ENCODE measurements at regions of chr7 and their contacts with region 1.

Region 1: DNA sequence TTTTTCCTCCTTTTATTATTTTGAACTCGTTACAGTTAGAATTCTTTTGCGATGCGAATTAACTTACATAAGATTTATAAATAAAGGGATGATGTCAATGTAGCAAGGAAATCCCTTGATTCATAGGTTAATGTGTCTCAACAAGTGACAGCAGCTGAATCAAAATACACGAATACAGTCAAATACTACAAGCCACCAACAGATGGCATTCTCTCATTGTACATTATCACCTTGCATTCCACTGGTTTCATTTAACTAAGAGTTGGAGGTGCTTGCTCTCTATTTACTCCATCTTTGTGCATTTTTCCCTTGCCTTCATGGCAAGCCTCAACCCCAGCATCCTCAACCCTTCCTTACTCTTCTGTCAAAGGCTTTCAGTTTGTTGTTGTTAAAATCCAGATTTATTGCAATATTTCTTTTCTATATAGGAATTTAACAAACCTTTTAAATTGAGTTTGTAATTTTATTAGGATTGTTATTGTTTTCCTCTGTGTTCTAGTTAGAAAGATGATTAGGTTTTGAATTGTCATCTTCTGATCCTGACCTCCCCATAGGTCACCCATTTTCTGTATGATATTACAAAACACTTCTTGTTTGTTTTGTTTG is 78.3 kb downstream of the SLC25A40 start:
- DNase-seq: peak; percentile 3
- H3K4me3 ChIP-seq: no peak overlapping the region
- CTCF ChIP-seq: peak; percentile 49

Region 2: DNA sequence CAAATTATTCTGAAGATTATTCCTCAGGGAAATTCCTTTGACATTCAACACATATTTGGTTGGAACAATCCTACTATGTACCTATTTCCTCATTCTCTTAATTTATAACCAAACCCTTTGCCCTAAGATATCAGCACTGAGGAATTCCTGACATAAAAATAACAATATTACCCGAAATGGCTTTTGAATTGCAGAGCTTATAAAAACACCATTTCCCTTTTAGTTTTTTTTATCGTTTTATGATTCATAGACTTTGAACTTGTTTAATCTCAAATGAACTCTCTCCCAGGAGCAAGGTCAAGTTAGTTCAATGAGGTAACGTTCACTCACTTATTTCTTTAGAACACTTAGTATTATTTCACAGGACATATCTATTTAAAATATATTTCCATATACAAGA is 189.5 kb before region 1 on chr7:
- CTCF ChIA-PET with region 1: no interaction called
- POLR2A ChIA-PET with region 1: no interaction called
- DNase-seq: no peak
- H3K4me3 ChIP-seq: no peak overlapping the region
- CTCF ChIP-seq: no peak

Region 3: GRCh38 chr7:87810130-87810529 is 12.2 kb after region 1 on chr7:
- CTCF ChIA-PET with region 1: interaction called, 15 read pairs
- POLR2A ChIA-PET with region 1: no interaction called
- DNase-seq: no peak
- H3K4me3 ChIP-seq: no peak overlapping the region
- CTCF ChIP-seq: no peak

Region 4: GRCh38 chr7:87933945-87934698 is 136.2 kb after region 1 on chr7 and contains the start of gene ADAM22:
- CTCF ChIA-PET with region 1: no interaction called
- POLR2A ChIA-PET with region 1: no interaction called
- DNase-seq: no peak
- H3K4me3 ChIP-seq: peak within 1 kb of the TSS; percentile 66
- CTCF ChIP-seq: no peak

Region 5: GRCh38 chr7:88842201-88842600 is 1044.3 kb after region 1 on chr7:
- CTCF ChIA-PET with region 1: no interaction called
- POLR2A ChIA-PET with region 1: no interaction called
- DNase-seq: no peak
- H3K4me3 ChIP-seq: no peak overlapping the region
- CTCF ChIP-seq: no peak

Measured in AG04449 (cell line).